ENCODE measurements at regions of chr16 and their contacts with region 1.

Region 1: GRCh38 chr16:27367461-27368357 is 34.3 kb upstream of the IL21R start:
- DNase-seq: peak; percentile 40 to 92 (median 70)
- H3K4me3 ChIP-seq: peak overlapping the region in 2 of 3 donors; percentile 1 to 40
- H3K27ac ChIP-seq: peak overlapping the region; percentile 33 to 34
- H3K4me1 ChIP-seq: peaks cover 0 to 6% (median 6%) of the 10 kb centered on the region in 3 donors
- H3K27me3 ChIP-seq: no peaks in the 10 kb centered on the region
- CTCF ChIP-seq: peak; percentile 79

Region 2: GRCh38 chr16:27005386-27005785 is 362.3 kb before region 1 on chr16:
- intact Hi-C with region 1: no loop called
- DNase-seq: no peak
- H3K4me3 ChIP-seq: no peak overlapping the region
- H3K27ac ChIP-seq: no peak overlapping the region
- H3K4me1 ChIP-seq: no peaks in the 10 kb centered on the region
- H3K27me3 ChIP-seq: no peaks in the 10 kb centered on the region
- CTCF ChIP-seq: no peak

Region 3: GRCh38 chr16:27179500-27180072 is 188.1 kb before region 1 on chr16:
- intact Hi-C with region 1: loop called (anchors 10 kb)
- DNase-seq: peak; percentile 71 to 92 (median 82)
- H3K4me3 ChIP-seq: no peak overlapping the region
- H3K27ac ChIP-seq: no peak overlapping the region
- H3K4me1 ChIP-seq: peaks cover 0 to 2% (median 0%) of the 10 kb centered on the region in 3 donors
- H3K27me3 ChIP-seq: no peaks in the 10 kb centered on the region
- CTCF ChIP-seq: peak; percentile 80

Region 4: GRCh38 chr16:27235055-27235937 is 132.4 kb before region 1 on chr16:
- intact Hi-C with region 1: loop called (anchors 5 kb)
- DNase-seq: peak; percentile 58 to 95 (median 72)
- H3K4me3 ChIP-seq: peak overlapping the region in 1 of 3 donors; percentile 4
- H3K27ac ChIP-seq: peak overlapping the region; percentile 78 to 81
- H3K4me1 ChIP-seq: peaks cover 0 to 25% (median 14%) of the 10 kb centered on the region in 3 donors
- H3K27me3 ChIP-seq: no peaks in the 10 kb centered on the region
- CTCF ChIP-seq: peak; percentile 63

Measured in kidney (tissue), 22 donors.